ENCODE measurements at regions of chr2 and their contacts with region 1.

Region 1: GRCh38 chr2:116490511-116491145 is 1323.9 kb upstream of the DDX18 start:
- DNase-seq: no peak
- H3K4me3 ChIP-seq: no peak overlapping the region
- H3K27ac ChIP-seq: no peak overlapping the region
- H3K4me1 ChIP-seq: no peaks in the 10 kb centered on the region
- H3K27me3 ChIP-seq: no peaks in the 10 kb centered on the region
- CTCF ChIP-seq: no peak
- POLR2A ChIP-seq: no peak

Region 2: GRCh38 chr2:116413659-116414058 is 77.0 kb before region 1 on chr2:
- intact Hi-C with region 1: loop called in 1 of 2 experiments (anchors 2 kb)
- DNase-seq: no peak
- H3K4me3 ChIP-seq: no peak overlapping the region
- H3K27ac ChIP-seq: no peak overlapping the region
- H3K4me1 ChIP-seq: no peaks in the 10 kb centered on the region
- H3K27me3 ChIP-seq: no peaks in the 10 kb centered on the region
- CTCF ChIP-seq: no peak
- POLR2A ChIP-seq: no peak